WTC11 (cell line): ENCODE measurements at regions of chr10 and their contacts with region 1.

Region 1: DNA sequence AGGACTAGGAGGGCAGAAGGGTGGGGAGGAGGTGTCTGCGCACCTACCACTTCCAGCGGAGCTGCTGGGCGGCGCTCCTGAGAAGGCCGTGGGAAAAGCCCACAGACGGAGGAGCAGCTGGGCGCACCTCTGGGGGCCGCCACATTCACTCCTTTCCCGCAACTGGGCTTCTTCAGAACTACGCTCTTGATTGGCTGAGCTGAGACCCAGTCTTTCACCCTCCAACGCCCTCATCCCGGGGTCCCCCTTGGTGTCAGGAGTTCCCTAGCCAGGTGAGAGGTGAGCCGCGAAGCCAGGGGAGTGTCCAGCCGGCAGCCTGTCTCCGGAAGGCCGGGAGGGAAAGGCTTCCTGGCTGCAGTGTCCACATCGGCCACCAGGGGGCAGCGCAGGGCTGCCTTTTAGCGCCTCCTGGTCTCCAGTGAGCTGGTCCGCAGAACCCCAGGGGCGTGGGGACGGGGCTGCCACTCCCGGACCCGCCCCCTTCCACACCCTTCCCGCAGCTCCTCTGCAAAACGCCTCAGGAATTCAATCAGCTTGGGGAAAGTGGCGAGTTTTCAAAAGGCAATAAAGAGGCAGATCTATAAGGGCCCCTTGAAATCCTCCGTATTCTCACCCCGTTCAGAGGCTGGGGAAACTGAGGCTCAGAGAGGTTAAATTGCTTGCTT is 98.8 kb downstream of the CHST15 start:
- DNase-seq: peak; percentile 97
- ATAC-seq: peak; percentile 68
- H3K4me3 Mint-ChIP-seq: peak overlapping the region; percentile 70
- H3K27ac Mint-ChIP-seq: no peak overlapping the region
- H3K4me1 Mint-ChIP-seq: peaks cover 20% of the 10 kb centered on the region
- H3K27me3 Mint-ChIP-seq: peaks cover 47% of the 10 kb centered on the region
- CTCF ChIP-seq: peak; percentile 100

Region 2: GRCh38 chr10:123885406-123886170 is 109.0 kb before region 1 on chr10:
- CTCF ChIA-PET with region 1: no interaction called
- POLR2A ChIA-PET with region 1: no interaction called
- DNase-seq: no peak
- ATAC-seq: no peak
- H3K4me3 Mint-ChIP-seq: no peak overlapping the region
- H3K27ac Mint-ChIP-seq: no peak overlapping the region
- H3K4me1 Mint-ChIP-seq: peaks cover 9% of the 10 kb centered on the region
- H3K27me3 Mint-ChIP-seq: peaks cover 11% of the 10 kb centered on the region
- CTCF ChIP-seq: no peak

Region 3: GRCh38 chr10:124049484-124049883 is 54.9 kb after region 1 on chr10:
- CTCF ChIA-PET with region 1: interaction called, 10 read pairs
- POLR2A ChIA-PET with region 1: no interaction called
- DNase-seq: no peak
- ATAC-seq: no peak
- H3K4me3 Mint-ChIP-seq: no peak overlapping the region
- H3K27ac Mint-ChIP-seq: no peak overlapping the region
- H3K4me1 Mint-ChIP-seq: peaks cover 32% of the 10 kb centered on the region
- H3K27me3 Mint-ChIP-seq: no peaks in the 10 kb centered on the region; the same call in 1 of the 2 replicates
- CTCF ChIP-seq: no peak

Region 4: DNA sequence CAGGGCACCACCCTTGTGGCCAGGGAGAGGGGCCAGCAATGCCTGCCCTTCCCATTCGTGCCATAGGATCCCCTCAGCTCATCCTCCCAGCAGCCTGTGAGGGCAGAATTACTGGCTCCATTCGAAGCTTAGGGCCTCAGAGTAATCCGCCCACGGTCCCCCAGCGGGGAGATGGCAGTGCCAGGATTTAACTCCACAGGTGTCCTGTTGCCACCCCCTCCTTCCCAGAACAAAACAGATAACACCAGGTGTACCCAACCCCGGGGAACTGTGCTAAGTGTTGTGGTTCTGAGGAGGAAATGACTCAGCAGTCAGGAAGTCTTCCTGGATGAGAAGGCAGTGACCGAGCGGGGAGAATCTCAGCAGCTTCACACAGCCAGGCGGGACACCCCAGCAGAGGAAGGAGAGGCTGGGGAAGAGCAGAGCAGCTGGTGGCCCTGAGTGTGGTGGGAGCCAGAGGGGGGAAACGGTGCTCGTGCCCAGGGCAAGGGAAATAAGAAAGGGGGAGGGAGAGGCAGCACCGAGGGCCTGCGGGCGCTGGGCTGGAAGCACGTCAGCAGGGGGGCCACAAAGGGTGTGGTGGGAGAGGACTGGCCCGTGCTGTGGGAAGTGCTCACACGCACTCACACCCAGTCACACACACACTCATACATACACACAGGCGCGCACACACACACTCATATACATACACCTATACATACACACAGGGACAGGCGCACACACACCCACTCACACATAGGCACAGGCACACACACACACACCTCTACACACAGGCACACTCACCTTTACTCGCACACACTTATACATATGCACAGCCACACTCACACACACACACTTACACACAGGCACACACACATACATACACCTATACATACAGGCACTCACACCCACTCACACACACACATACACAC is 158.6 kb after region 1 on chr10:
- CTCF ChIA-PET with region 1: interaction called, 10 read pairs
- POLR2A ChIA-PET with region 1: no interaction called
- DNase-seq: no peak
- ATAC-seq: peak; percentile 35; the same call in 1 of the 2 replicates
- H3K4me3 Mint-ChIP-seq: no peak overlapping the region
- H3K27ac Mint-ChIP-seq: no peak overlapping the region
- H3K4me1 Mint-ChIP-seq: peaks cover 21% of the 10 kb centered on the region
- H3K27me3 Mint-ChIP-seq: peaks cover 5% of the 10 kb centered on the region; the same call in 1 of the 2 replicates
- CTCF ChIP-seq: no peak

Region 5: GRCh38 chr10:124249812-124250432 is 255.4 kb after region 1 on chr10:
- CTCF ChIA-PET with region 1: interaction called, 26 read pairs
- POLR2A ChIA-PET with region 1: no interaction called
- DNase-seq: no peak
- ATAC-seq: peak; percentile 62; the same call in 1 of the 2 replicates
- H3K4me3 Mint-ChIP-seq: no peak overlapping the region
- H3K27ac Mint-ChIP-seq: no peak overlapping the region
- H3K4me1 Mint-ChIP-seq: no peaks in the 10 kb centered on the region
- H3K27me3 Mint-ChIP-seq: no peaks in the 10 kb centered on the region; the same call in 1 of the 2 replicates
- CTCF ChIP-seq: peak; percentile 60

Region 6: GRCh38 chr10:124296121-124296812 is 301.7 kb after region 1 on chr10:
- CTCF ChIA-PET with region 1: interaction called, 27 read pairs
- POLR2A ChIA-PET with region 1: no interaction called
- DNase-seq: peak; percentile 44
- ATAC-seq: peak; percentile 63
- H3K4me3 Mint-ChIP-seq: no peak overlapping the region
- H3K27ac Mint-ChIP-seq: no peak overlapping the region
- H3K4me1 Mint-ChIP-seq: no peaks in the 10 kb centered on the region
- H3K27me3 Mint-ChIP-seq: peaks cover 7% of the 10 kb centered on the region
- CTCF ChIP-seq: no peak